ENCODE measurements at regions of chr1 and their contacts with region 1.

Region 1: GRCh38 chr1:6359216-6360116 is 34.1 kb downstream of the ACOT7 start:
- DNase-seq: no peak
- H3K4me3 ChIP-seq: no peak overlapping the region
- H3K27me3 ChIP-seq: no peaks in the 10 kb centered on the region
- CTCF ChIP-seq: no peak

Region 2: DNA sequence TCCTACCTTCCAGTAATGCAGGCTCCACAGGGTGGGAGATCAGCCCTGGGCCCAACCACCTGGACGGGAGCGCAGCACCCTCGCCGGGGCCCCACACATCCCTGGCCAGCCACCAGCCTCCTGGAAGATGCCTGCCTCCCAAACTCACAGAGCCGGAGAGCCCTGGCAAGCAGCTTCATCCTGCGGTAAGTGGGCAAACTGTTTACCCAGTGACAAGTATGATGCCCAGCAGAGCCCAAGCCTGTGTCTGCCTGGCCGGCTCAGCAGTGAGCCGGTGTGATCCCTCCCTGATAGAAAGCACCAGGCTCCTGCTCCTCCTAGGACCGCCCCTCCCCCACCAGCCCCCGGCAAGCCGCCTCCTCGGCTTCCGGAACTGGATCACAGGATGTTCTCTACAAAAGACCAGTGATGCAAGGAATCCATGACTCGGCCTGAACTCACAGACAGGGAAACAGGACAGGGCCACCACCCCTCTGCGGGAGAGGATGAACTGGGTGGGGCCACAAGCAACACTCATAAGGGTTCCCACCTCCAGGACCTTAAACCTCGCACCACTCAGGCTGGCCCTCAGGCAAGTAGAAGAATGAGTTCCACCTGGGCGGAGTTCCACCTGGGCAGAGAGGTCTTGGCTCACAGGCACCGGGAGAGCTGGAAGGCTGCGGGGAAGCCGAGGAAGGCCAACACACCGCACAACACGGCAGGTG is 26.2 kb after region 1 on chr1:
- CTCF ChIA-PET with region 1: interaction called, 10 read pairs
- POLR2A ChIA-PET with region 1: no interaction called
- DNase-seq: no peak
- H3K4me3 ChIP-seq: no peak overlapping the region
- H3K27me3 ChIP-seq: no peaks in the 10 kb centered on the region
- CTCF ChIP-seq: no peak

Region 3: GRCh38 chr1:6408023-6408422 is 48.6 kb after region 1 on chr1:
- CTCF ChIA-PET with region 1: interaction called, 83 read pairs
- POLR2A ChIA-PET with region 1: no interaction called
- DNase-seq: no peak
- H3K4me3 ChIP-seq: no peak overlapping the region
- H3K27me3 ChIP-seq: no peaks in the 10 kb centered on the region; the same call in 1 of the 2 replicates
- CTCF ChIP-seq: no peak

Region 4: GRCh38 chr1:6414443-6414844 is 55.0 kb after region 1 on chr1:
- CTCF ChIA-PET with region 1: interaction called, 13 read pairs
- POLR2A ChIA-PET with region 1: no interaction called
- DNase-seq: no peak
- H3K4me3 ChIP-seq: no peak overlapping the region
- H3K27me3 ChIP-seq: peaks cover 27% of the 10 kb centered on the region
- CTCF ChIP-seq: peak; percentile 80